ENCODE measurements at regions of chr9 and their contacts with region 1.

Region 1: GRCh38 chr9:137240861-137241489 is at the start of gene TUBB4B:
- DNase-seq: peak; percentile 100
- H3K4me3 ChIP-seq: peak within 1 kb of the TSS; percentile 70 to 76 (median 73)
- H3K27ac ChIP-seq: peak within 1 kb of the TSS; percentile 71
- H3K4me1 ChIP-seq: peaks cover 13% of the 10 kb centered on the region
- H3K27me3 ChIP-seq: no peaks in the 10 kb centered on the region
- CTCF ChIP-seq: no peak
- POLR2A ChIP-seq: peak; percentile 99
- total RNA-seq, gene TUBB4B: 546 and 558 TPM in 2 replicates

Region 2: DNA sequence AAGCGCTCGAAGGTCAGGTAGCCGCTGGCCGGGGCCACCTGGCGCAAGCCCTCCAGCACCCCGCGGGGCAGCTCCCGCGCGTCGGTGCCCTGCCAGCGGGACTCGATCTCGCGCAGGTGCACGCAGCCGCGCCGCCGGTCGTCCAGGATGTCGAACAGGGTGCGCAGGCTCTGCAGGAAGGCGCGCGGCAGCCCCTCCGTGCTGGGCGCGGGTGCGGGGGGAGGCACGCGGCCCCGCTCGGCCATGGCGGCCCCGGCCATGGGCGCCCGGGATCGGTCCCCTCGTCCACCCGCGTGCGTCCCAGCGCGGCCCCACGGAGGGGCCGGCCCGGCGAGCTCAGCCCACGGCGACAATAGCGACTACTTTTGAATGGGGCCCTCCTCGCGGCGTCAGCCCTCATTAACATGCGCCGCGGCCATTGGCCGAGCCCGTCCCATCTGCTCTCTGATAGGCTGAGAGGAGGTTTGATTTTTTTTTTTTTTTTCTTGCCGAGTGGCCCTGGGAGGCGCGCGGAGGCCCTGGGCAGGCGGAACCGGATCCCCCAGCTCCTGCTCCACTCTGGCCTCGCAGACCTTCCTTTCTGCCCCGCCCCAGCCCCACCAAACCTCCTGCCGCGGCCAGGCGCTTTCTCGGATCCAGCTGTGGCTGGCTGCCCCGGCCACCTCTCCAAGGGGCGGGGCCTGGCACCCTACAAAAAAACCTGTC is 170.6 kb before region 1 on chr9 and contains the start of gene SAPCD2:
- CTCF ChIA-PET with region 1: interaction called, 10 read pairs
- POLR2A ChIA-PET with region 1: no interaction called
- dilution Hi-C with region 1: no loop called
- intact Hi-C with region 1: no loop called
- DNase-seq: peak; percentile 84
- H3K4me3 ChIP-seq: peak within 1 kb of the TSS; percentile 37 to 49 (median 39)
- H3K27ac ChIP-seq: no peak within 1 kb of the TSS
- H3K4me1 ChIP-seq: peaks cover 11% of the 10 kb centered on the region
- H3K27me3 ChIP-seq: no peaks in the 10 kb centered on the region
- CTCF ChIP-seq: no peak
- POLR2A ChIP-seq: peak; percentile 75
- total RNA-seq, gene SAPCD2: 24.3 and 27.8 TPM in 2 replicates

Region 3: GRCh38 chr9:137129456-137130175 is 111.4 kb before region 1 on chr9:
- CTCF ChIA-PET with region 1: interaction called, 17 read pairs
- POLR2A ChIA-PET with region 1: interaction called, 8 read pairs
- dilution Hi-C with region 1: no loop called
- intact Hi-C with region 1: no loop called
- DNase-seq: peak; percentile 92
- H3K4me3 ChIP-seq: peak overlapping the region; percentile 39 to 63 (median 51)
- H3K27ac ChIP-seq: peak overlapping the region; percentile 40
- H3K4me1 ChIP-seq: peaks cover 26% of the 10 kb centered on the region
- H3K27me3 ChIP-seq: no peaks in the 10 kb centered on the region
- CTCF ChIP-seq: no peak
- POLR2A ChIP-seq: peak; percentile 94

Region 4: DNA sequence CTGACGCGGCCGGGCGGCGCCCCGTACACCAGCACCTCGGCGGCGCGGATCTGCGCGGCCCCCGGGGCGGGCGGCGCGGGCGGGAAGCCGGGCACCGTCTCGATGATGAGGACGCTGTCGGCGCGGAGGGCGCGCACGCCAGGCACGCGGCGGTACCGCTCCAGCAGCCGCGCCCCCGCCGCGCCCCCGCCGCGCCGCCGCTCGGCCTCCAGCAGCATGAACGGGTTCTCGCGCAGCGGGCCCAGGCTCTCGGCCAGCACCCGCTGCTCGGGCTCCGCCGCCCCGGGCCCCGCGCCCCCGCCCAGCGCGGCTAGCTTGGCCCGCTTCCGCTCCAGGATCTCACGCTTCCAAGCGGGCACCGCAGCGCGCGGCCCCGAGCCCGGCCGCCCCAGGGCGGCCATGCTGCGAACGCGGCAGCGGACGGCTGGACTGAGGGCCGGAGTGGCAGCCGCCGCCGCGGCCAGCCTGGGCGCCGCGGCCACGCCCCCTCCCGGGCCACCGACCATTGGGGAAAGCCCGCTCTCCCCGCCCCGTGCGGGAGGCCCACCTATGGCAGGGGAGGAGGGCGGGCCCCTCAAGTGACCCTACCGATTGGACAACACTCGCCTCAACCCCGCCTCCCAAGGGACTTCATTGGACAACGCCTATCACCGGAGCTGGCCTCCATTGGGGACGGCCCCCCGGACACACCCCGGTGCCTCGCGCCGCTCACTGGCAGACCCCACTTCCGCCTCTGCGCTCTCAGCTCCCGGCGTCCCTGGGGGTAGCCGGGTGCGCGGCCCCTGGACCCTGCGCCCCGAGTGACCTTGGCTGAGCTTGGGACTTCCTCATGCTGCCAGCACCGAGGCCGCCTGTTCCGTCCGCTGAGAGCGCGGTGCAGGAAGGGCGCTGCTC is 40.4 kb before region 1 on chr9 and contains the start of gene TPRN:
- CTCF ChIA-PET with region 1: interaction called, 13 read pairs
- POLR2A ChIA-PET with region 1: interaction called, 5 read pairs
- dilution Hi-C with region 1: no loop called
- intact Hi-C with region 1: loop called (anchors 2 kb)
- DNase-seq: peak; percentile 98
- H3K4me3 ChIP-seq: peak within 1 kb of the TSS in 2 of 3 experiments; percentile 27 to 80
- H3K27ac ChIP-seq: no peak within 1 kb of the TSS
- H3K4me1 ChIP-seq: peaks cover 21% of the 10 kb centered on the region
- H3K27me3 ChIP-seq: no peaks in the 10 kb centered on the region
- CTCF ChIP-seq: no peak
- POLR2A ChIP-seq: peak; percentile 98
- total RNA-seq, gene TPRN: 12.1 and 12.4 TPM in 2 replicates

Region 5: DNA sequence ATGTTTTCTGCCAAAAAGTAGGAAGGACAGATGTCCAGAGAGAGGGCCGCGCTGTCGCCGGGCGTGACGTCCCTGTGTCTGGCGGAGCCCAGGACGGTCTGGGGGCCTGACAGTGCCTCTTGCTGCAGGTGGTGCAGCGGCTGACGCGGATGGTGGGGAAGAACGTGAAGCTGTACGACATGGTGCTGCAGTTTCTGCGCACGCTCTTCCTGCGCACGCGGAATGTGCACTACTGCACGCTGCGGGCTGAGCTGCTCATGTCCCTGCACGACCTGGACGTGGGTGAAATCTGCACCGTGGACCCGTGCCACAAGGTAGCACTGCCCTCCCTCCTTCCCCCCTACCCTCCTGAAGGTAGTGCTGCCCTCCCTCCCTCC is 21.9 kb after region 1 on chr9:
- CTCF ChIA-PET with region 1: interaction called, 23 read pairs
- POLR2A ChIA-PET with region 1: interaction called, 4 read pairs
- dilution Hi-C with region 1: no loop called
- intact Hi-C with region 1: loop called (anchors 1 kb)
- DNase-seq: no peak
- H3K4me3 ChIP-seq: no peak overlapping the region
- H3K27ac ChIP-seq: no peak overlapping the region
- H3K4me1 ChIP-seq: peaks cover 3% of the 10 kb centered on the region
- H3K27me3 ChIP-seq: no peaks in the 10 kb centered on the region
- CTCF ChIP-seq: no peak
- POLR2A ChIP-seq: no peak